Left cardiac atrium (tissue), 4 donors: ENCODE measurements at regions of chr6 and their contacts with region 1.

Region 1: DNA sequence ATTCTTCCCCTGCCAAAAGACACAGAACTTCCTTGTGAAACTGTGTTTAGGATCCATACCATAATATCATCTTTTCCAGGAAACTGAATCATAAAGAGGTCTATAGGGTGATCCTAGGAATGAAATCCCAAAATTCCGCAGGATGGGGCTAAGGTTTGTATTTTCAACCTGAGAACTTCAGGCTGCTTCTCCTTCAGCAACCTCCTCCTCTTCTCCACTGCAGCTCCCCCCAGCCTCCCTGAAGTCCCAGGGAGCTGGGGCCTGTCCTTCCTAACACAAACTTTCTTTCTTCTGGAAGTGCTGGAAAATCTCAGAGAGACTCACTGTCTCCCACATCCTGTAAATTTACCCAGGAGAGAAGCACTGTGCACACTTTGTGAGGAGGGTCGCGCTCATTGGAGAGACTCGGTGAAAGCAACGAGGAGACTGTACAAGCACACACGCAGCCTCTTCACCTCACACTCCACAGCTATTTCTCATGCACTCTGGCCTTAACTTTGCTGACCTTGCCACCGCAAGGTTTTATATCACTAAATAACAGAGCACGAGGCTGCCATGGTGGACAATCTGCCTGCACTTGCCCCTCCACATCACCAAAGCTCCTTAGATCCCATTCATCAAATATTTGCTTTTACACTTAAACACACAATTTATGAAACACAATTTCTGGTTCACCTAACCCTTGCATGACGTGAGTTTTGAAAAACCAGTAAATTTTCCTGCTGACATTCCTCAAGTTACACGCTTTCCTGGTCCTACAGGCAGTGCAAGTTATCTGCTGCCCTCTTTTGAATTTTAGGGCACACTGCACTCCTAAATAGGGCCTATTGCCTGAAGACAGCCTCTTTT is 14.3 kb downstream of the ID4 start:
- DNase-seq: no peak
- ATAC-seq: peak; percentile 94 to 95

Region 2: GRCh38 chr6:18748314-18748713 is 1103.2 kb before region 1 on chr6:
- intact Hi-C with region 1: loop called in 1 of 2 experiments (anchors 5 kb)
- DNase-seq: no peak
- ATAC-seq: no peak

Region 3: DNA sequence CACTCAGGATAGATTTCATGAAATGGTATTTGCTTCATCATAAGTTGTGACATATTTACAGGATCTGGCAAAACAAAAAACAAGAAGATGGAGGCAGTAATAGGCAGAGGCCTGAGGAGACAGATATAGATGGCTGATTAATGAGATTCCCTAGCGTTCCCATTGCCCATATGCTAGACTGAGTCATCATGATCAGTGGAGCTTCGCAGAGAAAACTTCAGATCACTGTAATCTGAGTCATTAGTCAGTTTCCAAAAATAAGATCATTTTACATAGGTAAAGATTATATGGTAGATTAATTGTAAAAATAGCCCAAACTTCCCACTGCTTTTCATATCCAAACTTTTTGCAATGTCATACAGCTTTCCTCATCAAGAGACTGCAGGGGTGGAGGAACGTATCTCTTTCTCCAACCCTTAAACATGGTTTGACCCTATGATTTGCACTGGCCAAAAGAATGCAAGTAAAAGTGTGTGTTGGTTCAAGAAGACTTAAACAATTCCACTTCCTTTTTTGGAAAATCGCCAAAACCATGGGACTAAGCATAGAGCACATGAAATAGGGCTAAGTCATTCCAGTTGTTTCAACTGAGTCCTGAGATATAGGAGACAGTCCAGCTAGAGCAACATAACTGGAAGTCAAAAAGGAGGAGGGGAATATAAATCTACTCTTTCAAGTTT is 838.3 kb before region 1 on chr6:
- intact Hi-C with region 1: loop called in 1 of 2 experiments (anchors 10 kb)
- DNase-seq: no peak
- ATAC-seq: no peak